CD4-positive, alpha-beta memory T cell (primary cell): ENCODE measurements at regions of chr1 and their contacts with region 1.

Region 1: DNA sequence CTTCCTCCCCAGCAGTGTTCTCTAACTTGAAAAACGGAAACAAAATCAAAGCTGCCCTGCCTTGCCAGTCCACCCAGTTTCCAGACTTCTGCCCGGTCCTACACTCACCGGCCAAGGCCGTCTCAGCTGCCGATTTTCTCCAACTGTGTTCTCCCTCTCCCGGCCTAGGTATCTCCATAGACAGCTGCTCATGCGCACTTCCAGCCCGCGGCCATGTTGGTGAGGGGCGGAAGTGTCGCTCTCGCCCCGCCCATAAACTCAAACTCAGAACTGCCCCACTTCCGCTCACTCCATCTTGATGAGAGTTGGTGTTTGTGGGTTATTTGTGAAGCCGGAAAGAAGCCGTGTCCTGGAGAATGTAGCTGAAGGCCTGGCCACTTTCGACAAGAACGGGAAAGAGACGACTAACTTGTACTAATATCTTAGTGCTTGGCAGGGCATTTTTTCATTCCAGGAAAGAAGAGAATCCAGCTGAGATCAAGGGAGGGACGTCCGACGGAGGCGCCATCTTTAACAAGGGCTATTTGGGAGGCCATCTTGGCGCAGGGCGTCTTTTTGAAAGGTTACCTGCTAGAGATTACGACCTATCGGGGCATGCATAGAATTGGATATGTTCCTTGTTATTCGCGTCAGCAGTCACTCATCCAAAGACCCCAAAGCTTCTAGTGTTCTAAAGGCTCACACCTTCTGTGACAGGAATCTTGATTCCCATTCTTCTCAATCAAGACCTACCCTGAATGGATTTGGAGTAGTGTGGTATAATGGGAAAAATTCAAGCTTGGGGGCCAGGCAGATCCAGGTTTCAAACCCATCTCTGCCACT is at the start of gene USF1:
- DNase-seq: peak; percentile 94 to 95 (median 95)
- H3K4me3 ChIP-seq: peak within 1 kb of the TSS; percentile 62 to 89
- H3K4me3 Mint-ChIP-seq: peak within 1 kb of the TSS; percentile 87 to 99 (median 94)
- H3K27ac ChIP-seq: peak within 1 kb of the TSS; percentile 91
- H3K27ac Mint-ChIP-seq: peak within 1 kb of the TSS; percentile 90 to 100 (median 99)
- H3K4me1 ChIP-seq: peaks cover 39% of the 10 kb centered on the region
- H3K4me1 Mint-ChIP-seq: peaks cover 29 to 58% (median 42%) of the 10 kb centered on the region in 4 donors
- H3K27me3 ChIP-seq: no peaks in the 10 kb centered on the region
- H3K27me3 Mint-ChIP-seq: no peaks in the 10 kb centered on the region
- total RNA-seq, gene USF1: 101 to 102 TPM

Region 2: GRCh38 chr1:160755911-160756848 is 289.8 kb before region 1 on chr1:
- CTCF ChIA-PET with region 1: no interaction called
- POLR2A ChIA-PET with region 1: no interaction called
- intact Hi-C with region 1: no loop called
- DNase-seq: peak in 3 of 5 donors; percentile 25 to 48 (median 31)
- H3K4me3 ChIP-seq: no peak overlapping the region
- H3K4me3 Mint-ChIP-seq: peak overlapping the region in 4 of 8 donors; percentile 2 to 63 (median 32)
- H3K27ac ChIP-seq: no peak overlapping the region
- H3K27ac Mint-ChIP-seq: peak overlapping the region in 5 of 7 donors; percentile 7 to 85 (median 52)
- H3K4me1 ChIP-seq: peaks cover 16% of the 10 kb centered on the region
- H3K4me1 Mint-ChIP-seq: peaks cover 6 to 32% (median 15%) of the 10 kb centered on the region in 4 donors
- H3K27me3 ChIP-seq: no peaks in the 10 kb centered on the region
- H3K27me3 Mint-ChIP-seq: peaks cover 0 to 2% of the 10 kb centered on the region in 2 donors

Region 3: DNA sequence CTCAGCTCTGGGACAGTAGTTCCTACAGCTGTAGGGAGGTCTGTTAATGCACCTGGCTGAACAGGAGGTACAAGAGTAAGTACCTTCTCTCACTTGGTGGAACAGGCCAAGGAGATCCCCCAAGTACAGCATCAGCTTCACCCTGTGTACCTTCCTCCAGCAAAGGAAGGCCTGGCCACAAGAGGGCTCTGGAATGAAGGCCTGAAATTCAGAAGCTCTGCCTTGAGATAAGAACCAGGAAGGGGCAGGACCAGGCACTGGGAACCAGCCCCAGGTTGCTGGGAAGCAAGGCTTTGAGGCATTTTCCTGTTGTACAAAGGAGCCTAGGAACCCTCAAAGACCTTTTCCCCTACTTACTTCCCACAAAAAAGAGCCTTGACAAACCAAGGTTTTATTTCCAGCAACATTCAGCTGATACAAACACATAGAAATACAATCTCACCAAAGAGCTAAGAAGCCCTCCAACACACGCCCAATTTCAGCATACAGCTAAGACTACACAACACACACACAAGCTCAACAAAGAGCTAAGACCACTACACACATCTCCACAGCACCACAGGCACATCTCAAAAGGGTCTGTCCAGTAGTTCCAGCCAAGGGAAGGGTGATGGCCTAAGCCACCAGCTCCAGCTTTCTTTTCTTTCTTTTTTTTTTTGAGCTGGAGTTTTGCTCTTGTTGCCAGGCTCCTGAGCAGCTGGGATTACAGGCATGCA is 48.5 kb before region 1 on chr1:
- CTCF ChIA-PET with region 1: interaction called, 29 read pairs
- POLR2A ChIA-PET with region 1: interaction called, 13 read pairs
- intact Hi-C with region 1: no loop called
- DNase-seq: peak in 4 of 5 donors; percentile 30 to 42 (median 38)
- H3K4me3 ChIP-seq: no peak overlapping the region
- H3K4me3 Mint-ChIP-seq: no peak overlapping the region
- H3K27ac ChIP-seq: no peak overlapping the region
- H3K27ac Mint-ChIP-seq: peak overlapping the region; percentile 22 to 93 (median 84)
- H3K4me1 ChIP-seq: peaks cover 8% of the 10 kb centered on the region
- H3K4me1 Mint-ChIP-seq: peaks cover 4 to 8% (median 5%) of the 10 kb centered on the region in 4 donors
- H3K27me3 ChIP-seq: no peaks in the 10 kb centered on the region
- H3K27me3 Mint-ChIP-seq: no peaks in the 10 kb centered on the region

Region 4: GRCh38 chr1:161061419-161061818 is 15.5 kb after region 1 on chr1:
- CTCF ChIA-PET with region 1: interaction called, 171 read pairs
- POLR2A ChIA-PET with region 1: interaction called, 602 read pairs
- intact Hi-C with region 1: no loop called
- DNase-seq: no peak
- H3K4me3 ChIP-seq: no peak overlapping the region
- H3K4me3 Mint-ChIP-seq: peak overlapping the region in 2 of 8 donors; percentile 34 to 61
- H3K27ac ChIP-seq: no peak overlapping the region
- H3K27ac Mint-ChIP-seq: peak overlapping the region in 6 of 7 donors; percentile 22 to 92 (median 46)
- H3K4me1 ChIP-seq: peaks cover 89% of the 10 kb centered on the region
- H3K4me1 Mint-ChIP-seq: peaks cover 40 to 77% (median 56%) of the 10 kb centered on the region in 4 donors
- H3K27me3 ChIP-seq: no peaks in the 10 kb centered on the region
- H3K27me3 Mint-ChIP-seq: no peaks in the 10 kb centered on the region

Region 5: DNA sequence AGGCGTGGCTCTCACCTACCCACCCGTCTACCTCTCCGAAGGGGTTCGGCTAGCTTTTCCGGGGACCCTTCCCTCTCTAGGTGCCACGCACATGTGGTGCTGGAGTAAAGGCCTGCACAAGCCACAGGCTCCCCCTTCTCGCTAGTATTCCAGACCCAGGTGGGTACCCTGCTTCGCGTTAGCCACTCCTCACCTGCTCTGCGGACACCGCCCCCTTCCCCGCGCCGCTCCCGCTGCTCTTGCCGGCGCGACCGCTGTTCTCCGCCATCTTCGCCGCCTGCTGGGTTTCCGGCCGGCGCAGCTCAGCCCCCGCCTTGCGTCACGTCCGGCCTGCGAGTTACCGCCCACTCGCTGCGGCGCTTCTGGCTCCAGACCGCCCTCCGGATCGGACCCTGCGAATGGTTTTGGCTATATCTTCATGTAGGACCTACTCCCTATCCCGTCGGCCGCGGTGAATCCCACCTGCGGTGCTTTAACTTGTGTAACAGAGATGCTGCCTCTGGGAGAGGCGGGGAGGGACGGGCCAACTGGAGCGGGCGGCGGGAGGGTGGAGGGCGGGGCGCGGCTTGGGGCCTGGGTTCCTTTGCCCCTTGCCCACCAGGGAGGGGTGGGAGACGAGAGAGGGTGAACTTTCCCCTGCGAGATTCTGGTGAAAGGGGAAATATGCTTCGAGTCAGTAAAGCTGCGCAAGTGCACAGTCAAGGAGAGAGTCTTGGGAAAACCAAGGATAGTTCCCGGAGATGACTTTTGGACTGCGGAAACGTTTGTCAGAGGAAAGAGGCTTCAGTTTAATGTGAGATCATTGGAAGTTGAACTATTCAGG is 72.0 kb after region 1 on chr1 and contains the starts of genes NIT1 and PFDN2:
- CTCF ChIA-PET with region 1: no interaction called
- POLR2A ChIA-PET with region 1: interaction called, 22 read pairs
- intact Hi-C with region 1: loop called (anchors 1 kb)
- DNase-seq: peak; percentile 83 to 87 (median 86)
- H3K4me3 ChIP-seq: peak within 1 kb of the TSS; percentile 32 to 95
- H3K4me3 Mint-ChIP-seq: peak within 1 kb of the TSS; percentile 94 to 98 (median 96)
- H3K27ac ChIP-seq: peak within 1 kb of the TSS; percentile 94
- H3K27ac Mint-ChIP-seq: peak within 1 kb of the TSS; percentile 94 to 99 (median 98)
- H3K4me1 ChIP-seq: peaks cover 64% of the 10 kb centered on the region
- H3K4me1 Mint-ChIP-seq: peaks cover 36 to 79% (median 61%) of the 10 kb centered on the region in 4 donors
- H3K27me3 ChIP-seq: no peaks in the 10 kb centered on the region
- H3K27me3 Mint-ChIP-seq: no peaks in the 10 kb centered on the region
- total RNA-seq, gene NIT1: 49.0 to 50.5 TPM
- total RNA-seq, gene PFDN2: 40.8 to 41.0 TPM

Region 6: GRCh38 chr1:161153679-161154426 is 107.9 kb after region 1 on chr1 and contains the start of gene UFC1:
- CTCF ChIA-PET with region 1: interaction called, 3 read pairs
- POLR2A ChIA-PET with region 1: interaction called, 12 read pairs
- intact Hi-C with region 1: loop called (anchors 5 kb)
- DNase-seq: peak; percentile 87 to 93 (median 90)
- H3K4me3 ChIP-seq: peak within 1 kb of the TSS; percentile 37 to 100
- H3K4me3 Mint-ChIP-seq: peak within 1 kb of the TSS; percentile 96 to 100 (median 99)
- H3K27ac ChIP-seq: peak within 1 kb of the TSS; percentile 99
- H3K27ac Mint-ChIP-seq: peak within 1 kb of the TSS; percentile 99 to 100 (median 100)
- H3K4me1 ChIP-seq: peaks cover 23% of the 10 kb centered on the region
- H3K4me1 Mint-ChIP-seq: peaks cover 23 to 46% (median 32%) of the 10 kb centered on the region in 4 donors
- H3K27me3 ChIP-seq: no peaks in the 10 kb centered on the region
- H3K27me3 Mint-ChIP-seq: no peaks in the 10 kb centered on the region
- total RNA-seq, gene UFC1: 87.2 to 87.4 TPM